ENCODE measurements at regions of chr1 and their contacts with region 1.

Region 1: DNA sequence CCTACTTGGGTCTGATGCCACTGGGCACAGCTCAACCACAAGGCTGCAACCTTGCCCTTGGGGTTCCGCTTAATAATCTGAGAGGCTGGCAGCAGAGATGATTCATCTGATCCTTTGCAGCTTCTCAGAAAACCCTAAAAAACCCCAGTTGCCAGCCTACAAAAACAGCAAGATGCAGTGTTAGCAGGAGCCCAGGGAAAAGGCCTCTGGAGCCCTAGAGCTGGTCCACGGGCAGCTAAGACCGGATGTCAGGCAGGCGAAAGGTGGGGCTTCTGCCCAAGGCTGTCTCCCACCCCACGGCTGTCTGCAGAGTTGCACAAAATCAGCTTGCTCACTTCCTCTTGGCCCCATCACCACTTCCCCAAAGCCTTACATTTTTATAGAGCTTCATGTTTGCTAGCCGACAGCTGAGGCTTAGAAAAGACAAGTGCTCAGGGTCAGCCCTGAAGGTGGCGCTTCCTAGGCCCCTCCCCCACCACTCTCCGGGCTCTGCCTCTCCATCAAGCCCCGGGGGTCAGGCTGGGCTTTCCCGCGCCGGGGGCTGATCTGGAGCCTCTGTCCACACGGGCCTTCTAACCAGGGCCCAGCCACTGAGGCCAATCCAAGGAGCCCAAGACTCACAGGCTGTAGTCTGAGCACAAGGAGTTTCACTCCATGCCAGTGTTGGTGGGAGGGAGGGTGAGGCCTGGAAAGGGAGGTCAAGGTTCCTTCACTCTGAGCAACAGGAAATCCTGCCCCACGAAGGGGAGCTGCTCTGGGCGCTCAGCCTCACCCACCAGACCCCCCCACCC is 4.2 kb upstream of the ADORA3 start:
- DNase-seq: peak; percentile 66
- ATAC-seq: peak; percentile 67
- H3K4me3 Mint-ChIP-seq: peak overlapping the region; percentile 77
- H3K27ac Mint-ChIP-seq: no peak overlapping the region
- H3K4me1 Mint-ChIP-seq: peaks cover 67% of the 10 kb centered on the region
- H3K27me3 Mint-ChIP-seq: no peaks in the 10 kb centered on the region
- CTCF ChIP-seq: no peak

Region 2: GRCh38 chr1:111281411-111281810 is 226.2 kb before region 1 on chr1:
- CTCF ChIA-PET with region 1: no interaction called
- POLR2A ChIA-PET with region 1: no interaction called
- intact Hi-C with region 1: no loop called
- DNase-seq: no peak
- ATAC-seq: no peak
- H3K4me3 Mint-ChIP-seq: no peak overlapping the region
- H3K27ac Mint-ChIP-seq: no peak overlapping the region
- H3K4me1 Mint-ChIP-seq: no peaks in the 10 kb centered on the region
- H3K27me3 Mint-ChIP-seq: no peaks in the 10 kb centered on the region
- CTCF ChIP-seq: no peak

Region 3: GRCh38 chr1:111448918-111449702 is 58.5 kb before region 1 on chr1 and contains the starts of genes ATP5PB and WDR77:
- CTCF ChIA-PET with region 1: interaction called, 6 read pairs
- POLR2A ChIA-PET with region 1: interaction called, 38 read pairs
- intact Hi-C with region 1: loop called (anchors 1 kb)
- DNase-seq: peak; percentile 77
- ATAC-seq: peak; percentile 96
- H3K4me3 Mint-ChIP-seq: peak within 1 kb of the TSS; percentile 100
- H3K27ac Mint-ChIP-seq: peak within 1 kb of the TSS; percentile 98
- H3K4me1 Mint-ChIP-seq: peaks cover 71% of the 10 kb centered on the region
- H3K27me3 Mint-ChIP-seq: no peaks in the 10 kb centered on the region
- CTCF ChIP-seq: no peak
- total RNA-seq, gene ATP5PB: 220 and 229 TPM in 2 replicates
- total RNA-seq, gene WDR77: 55.8 and 63.3 TPM in 2 replicates

Region 4: GRCh38 chr1:111497592-111497991 is 10.0 kb before region 1 on chr1:
- CTCF ChIA-PET with region 1: interaction called, 26 read pairs
- POLR2A ChIA-PET with region 1: interaction called, 42 read pairs
- intact Hi-C with region 1: no loop called
- DNase-seq: no peak
- ATAC-seq: peak; percentile 77
- H3K4me3 Mint-ChIP-seq: no peak overlapping the region
- H3K27ac Mint-ChIP-seq: no peak overlapping the region
- H3K4me1 Mint-ChIP-seq: peaks cover 19% of the 10 kb centered on the region
- H3K27me3 Mint-ChIP-seq: no peaks in the 10 kb centered on the region
- CTCF ChIP-seq: no peak

Region 5: DNA sequence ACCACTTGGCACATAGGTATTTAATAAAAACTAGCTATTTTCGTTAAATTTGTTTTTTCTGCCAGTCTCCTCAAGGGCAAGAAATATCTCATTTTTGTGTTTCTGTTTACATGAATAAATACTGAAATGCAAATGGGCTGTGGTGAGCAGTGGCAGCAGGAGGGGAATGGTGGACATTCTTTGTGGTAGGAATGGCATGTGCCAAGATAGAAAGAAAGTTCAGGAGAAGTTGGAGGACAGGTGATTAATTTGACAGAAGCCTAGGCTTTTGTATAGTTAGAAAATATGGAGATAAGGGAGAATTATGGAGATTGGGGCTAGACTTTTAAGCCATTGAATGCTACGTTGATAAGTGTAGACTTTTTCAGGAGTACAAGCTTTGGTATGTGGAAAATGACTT is 120.5 kb after region 1 on chr1:
- CTCF ChIA-PET with region 1: interaction called, 11 read pairs
- POLR2A ChIA-PET with region 1: interaction called, 8 read pairs
- intact Hi-C with region 1: no loop called
- DNase-seq: no peak
- ATAC-seq: no peak
- H3K4me3 Mint-ChIP-seq: peak overlapping the region; percentile 51
- H3K27ac Mint-ChIP-seq: peak overlapping the region; percentile 66
- H3K4me1 Mint-ChIP-seq: peaks cover 88% of the 10 kb centered on the region
- H3K27me3 Mint-ChIP-seq: no peaks in the 10 kb centered on the region
- CTCF ChIP-seq: no peak

Region 6: GRCh38 chr1:111707906-111708305 is 200.3 kb after region 1 on chr1:
- CTCF ChIA-PET with region 1: interaction called, 54 read pairs
- POLR2A ChIA-PET with region 1: interaction called, 3 read pairs
- intact Hi-C with region 1: loop called (anchors 1 kb)
- DNase-seq: no peak
- ATAC-seq: no peak
- H3K4me3 Mint-ChIP-seq: no peak overlapping the region
- H3K27ac Mint-ChIP-seq: no peak overlapping the region
- H3K4me1 Mint-ChIP-seq: no peaks in the 10 kb centered on the region
- H3K27me3 Mint-ChIP-seq: no peaks in the 10 kb centered on the region
- CTCF ChIP-seq: no peak

Region 7: GRCh38 chr1:111755331-111756123 is 247.9 kb after region 1 on chr1 and contains the start of gene DDX20:
- CTCF ChIA-PET with region 1: interaction called, 7 read pairs
- POLR2A ChIA-PET with region 1: interaction called, 27 read pairs
- intact Hi-C with region 1: loop called (anchors 1 kb)
- DNase-seq: peak; percentile 94
- ATAC-seq: peak; percentile 89
- H3K4me3 Mint-ChIP-seq: peak within 1 kb of the TSS; percentile 97
- H3K27ac Mint-ChIP-seq: peak within 1 kb of the TSS; percentile 96
- H3K4me1 Mint-ChIP-seq: peaks cover 30% of the 10 kb centered on the region
- H3K27me3 Mint-ChIP-seq: no peaks in the 10 kb centered on the region
- CTCF ChIP-seq: peak; percentile 55
- total RNA-seq, gene DDX20: 21.5 and 22.4 TPM in 2 replicates

Region 8: GRCh38 chr1:111948209-111949171 is 440.9 kb after region 1 on chr1:
- CTCF ChIA-PET with region 1: no interaction called
- POLR2A ChIA-PET with region 1: no interaction called
- intact Hi-C with region 1: no loop called
- DNase-seq: no peak
- ATAC-seq: no peak
- H3K4me3 Mint-ChIP-seq: no peak overlapping the region
- H3K27ac Mint-ChIP-seq: no peak overlapping the region
- H3K4me1 Mint-ChIP-seq: no peaks in the 10 kb centered on the region
- H3K27me3 Mint-ChIP-seq: peaks cover 27% of the 10 kb centered on the region
- CTCF ChIP-seq: no peak